IMR-90 (cell line): ENCODE measurements at regions of chr4 and their contacts with region 1.

Region 1: DNA sequence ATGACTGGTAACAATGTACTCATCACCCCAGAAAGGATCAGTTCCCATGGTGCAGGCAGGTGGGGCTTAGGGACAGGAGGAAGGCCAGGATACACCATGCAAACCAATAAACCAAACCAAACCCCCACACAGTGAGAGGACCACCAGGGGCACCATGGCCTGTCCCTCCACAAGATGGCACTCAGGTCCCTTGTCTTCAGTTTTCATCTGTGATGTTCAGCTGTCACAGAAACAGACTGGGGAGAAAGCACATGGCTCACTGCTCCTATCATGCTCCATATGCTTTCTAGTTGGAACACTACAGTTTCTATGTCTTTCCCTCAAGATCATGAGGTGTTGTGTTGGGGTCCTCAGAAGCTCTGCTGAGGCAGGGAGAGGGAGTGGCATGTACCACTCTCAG is 10.1 kb downstream of the HS3ST1 start:
- DNase-seq: peak; percentile 7
- ATAC-seq: 0 out of 2 replicates have a peak, but pooled peaks have one; percentile 32
- H3K4me3 ChIP-seq: no peak overlapping the region
- H3K27ac ChIP-seq: no peak overlapping the region
- H3K4me1 ChIP-seq: no peaks in the 10 kb centered on the region
- H3K27me3 ChIP-seq: no peaks in the 10 kb centered on the region; the same call in none of the 2 replicates
- CTCF ChIP-seq: no peak
- POLR2A ChIP-seq: no peak
- RAD21 ChIP-seq: no peak; the same call in 1 of the 2 replicates

Region 2: GRCh38 chr4:11455201-11455835 is 36.7 kb after region 1 on chr4:
- CTCF ChIA-PET with region 1: no interaction called
- POLR2A ChIA-PET with region 1: no interaction called
- dilution Hi-C with region 1: no loop called
- in situ Hi-C with region 1: no loop called
- intact Hi-C with region 1: no loop called
- DNase-seq: no peak
- ATAC-seq: no peak
- H3K4me3 ChIP-seq: no peak overlapping the region
- H3K27ac ChIP-seq: no peak overlapping the region
- H3K4me1 ChIP-seq: no peaks in the 10 kb centered on the region
- H3K27me3 ChIP-seq: no peaks in the 10 kb centered on the region
- CTCF ChIP-seq: no peak
- POLR2A ChIP-seq: no peak
- RAD21 ChIP-seq: no peak

Region 3: GRCh38 chr4:11720292-11720691 is 301.7 kb after region 1 on chr4:
- CTCF ChIA-PET with region 1: no interaction called
- POLR2A ChIA-PET with region 1: no interaction called
- dilution Hi-C with region 1: no loop called
- in situ Hi-C with region 1: no loop called
- intact Hi-C with region 1: loop called (anchors 1 kb)
- DNase-seq: peak; percentile 67
- ATAC-seq: peak; percentile 89
- H3K4me3 ChIP-seq: no peak overlapping the region
- H3K27ac ChIP-seq: no peak overlapping the region
- H3K4me1 ChIP-seq: no peaks in the 10 kb centered on the region
- H3K27me3 ChIP-seq: no peaks in the 10 kb centered on the region
- CTCF ChIP-seq: peak; percentile 88
- POLR2A ChIP-seq: no peak
- RAD21 ChIP-seq: peak; percentile 89